ENCODE measurements at regions of chr1 and their contacts with region 1.

Region 1: GRCh38 chr1:230797942-230798418 is 50.8 kb downstream of the CAPN9 start:
- DNase-seq: no peak
- H3K4me3 ChIP-seq: no peak overlapping the region
- H3K27me3 ChIP-seq: no peaks in the 10 kb centered on the region
- CTCF ChIP-seq: peak; percentile 92

Region 2: DNA sequence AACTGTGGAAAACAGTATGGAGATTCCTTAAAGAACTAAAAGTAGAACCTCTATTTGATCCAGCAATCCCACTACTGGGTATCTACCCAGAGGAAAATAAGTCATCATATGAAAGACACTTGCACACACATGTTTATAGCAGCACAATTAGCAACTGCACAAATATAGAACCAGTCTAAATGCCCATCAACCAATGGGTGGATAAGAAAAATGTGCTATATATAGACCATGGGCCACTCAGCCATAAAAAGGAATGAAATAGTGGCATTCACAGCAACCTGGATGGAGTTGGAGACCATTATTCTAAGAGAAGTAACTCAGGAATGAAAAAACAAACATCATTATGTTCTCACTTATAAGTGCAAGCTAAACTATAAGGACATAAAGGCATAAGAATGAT is 266.9 kb before region 1 on chr1:
- CTCF ChIA-PET with region 1: no interaction called
- POLR2A ChIA-PET with region 1: no interaction called
- DNase-seq: no peak
- H3K4me3 ChIP-seq: no peak overlapping the region
- H3K27me3 ChIP-seq: no peaks in the 10 kb centered on the region
- CTCF ChIP-seq: no peak

Region 3: DNA sequence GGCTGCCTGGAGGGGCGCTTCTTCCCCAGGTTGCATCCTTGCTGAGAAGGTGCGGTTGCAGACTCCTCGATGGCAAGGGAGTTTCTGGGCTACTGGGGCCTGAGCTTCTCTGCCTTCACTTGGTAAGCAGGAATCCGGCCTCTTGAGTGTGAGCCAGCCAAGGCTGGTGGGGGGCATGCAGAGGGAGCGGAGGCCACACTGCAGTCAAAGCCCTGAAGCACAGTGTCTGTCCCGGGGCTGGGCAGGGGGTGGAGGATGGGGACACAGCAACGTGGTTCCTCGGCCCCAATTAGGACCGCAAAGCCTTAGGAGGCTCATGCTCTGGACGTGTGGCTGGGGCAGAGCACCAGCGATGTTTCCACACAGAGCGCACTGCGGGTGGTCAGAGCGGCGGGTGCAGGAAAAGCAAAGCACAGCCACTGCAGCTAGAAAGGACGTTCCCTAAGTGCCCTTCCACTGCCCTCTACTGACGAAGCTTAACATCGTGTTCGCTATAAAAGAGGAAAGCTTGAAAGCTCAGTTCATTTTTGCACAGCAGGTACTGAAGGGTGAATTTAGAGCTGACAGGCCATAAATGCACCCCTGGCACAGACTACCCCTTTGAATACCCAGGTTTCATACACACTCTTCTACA is 216.4 kb before region 1 on chr1:
- CTCF ChIA-PET with region 1: no interaction called
- POLR2A ChIA-PET with region 1: no interaction called
- DNase-seq: no peak
- H3K4me3 ChIP-seq: no peak overlapping the region
- H3K27me3 ChIP-seq: no peaks in the 10 kb centered on the region
- CTCF ChIP-seq: no peak

Region 4: DNA sequence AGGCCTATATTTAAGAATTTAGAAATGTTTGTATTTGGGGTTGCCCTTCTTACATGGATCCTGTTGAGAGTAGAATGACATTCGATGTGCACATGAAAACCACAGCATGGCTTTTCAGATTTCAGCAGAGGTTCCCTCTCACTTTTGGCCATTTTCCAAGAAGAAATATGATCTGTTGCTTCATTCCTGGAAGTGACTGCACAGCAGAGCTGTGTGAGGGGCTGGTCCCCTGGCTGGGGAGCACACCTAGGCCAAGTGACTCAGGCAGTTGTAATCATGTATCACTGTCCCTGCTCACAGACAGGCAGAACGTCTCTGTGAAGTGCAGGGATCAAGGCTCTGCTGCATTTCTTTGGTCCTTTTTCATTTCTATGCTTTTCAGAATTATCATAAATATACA is 116.4 kb before region 1 on chr1:
- CTCF ChIA-PET with region 1: no interaction called
- POLR2A ChIA-PET with region 1: no interaction called
- DNase-seq: peak; percentile 19
- H3K4me3 ChIP-seq: no peak overlapping the region
- H3K27me3 ChIP-seq: no peaks in the 10 kb centered on the region
- CTCF ChIP-seq: no peak

Region 5: GRCh38 chr1:230867903-230868735 is 70.1 kb after region 1 on chr1 and contains the start of gene C1orf198:
- CTCF ChIA-PET with region 1: interaction called, 23 read pairs
- POLR2A ChIA-PET with region 1: no interaction called
- DNase-seq: no peak
- H3K4me3 ChIP-seq: peak within 1 kb of the TSS; percentile 76
- H3K27me3 ChIP-seq: no peaks in the 10 kb centered on the region
- CTCF ChIP-seq: no peak
- polyA plus RNA-seq, gene C1orf198: 186 and 195 TPM in 2 replicates

Region 6: GRCh38 chr1:230917284-230918135 is 119.5 kb after region 1 on chr1:
- CTCF ChIA-PET with region 1: interaction called, 157 read pairs
- POLR2A ChIA-PET with region 1: no interaction called
- DNase-seq: no peak
- H3K4me3 ChIP-seq: no peak overlapping the region
- H3K27me3 ChIP-seq: no peaks in the 10 kb centered on the region
- CTCF ChIP-seq: peak; percentile 80

Measured in BJ (cell line).